SK-N-SH (cell line): ENCODE measurements at regions of chr12 and their contacts with region 1.

Region 1: GRCh38 chr12:81610955-81611889 is 147.9 kb downstream of the PPFIA2 start:
- DNase-seq: peak; percentile 15
- H3K4me3 ChIP-seq: peak overlapping the region in 1 of 2 experiments; percentile 26; a peak in 3 of 4 replicates
- H3K27ac ChIP-seq: no peak overlapping the region
- H3K4me1 ChIP-seq: no peaks in the 10 kb centered on the region; a peak in 1 of 4 replicates
- H3K27me3 ChIP-seq: no peaks in the 10 kb centered on the region
- CTCF ChIP-seq: peak; percentile 53
- EP300 ChIP-seq: no peak
- RAD21 ChIP-seq: peak; percentile 42

Region 2: GRCh38 chr12:81597928-81598604 is 13.2 kb before region 1 on chr12:
- CTCF ChIA-PET with region 1: interaction called, 13 read pairs
- POLR2A ChIA-PET with region 1: no interaction called
- DNase-seq: peak; percentile 7
- H3K4me3 ChIP-seq: no peak overlapping the region
- H3K27ac ChIP-seq: peak overlapping the region in 1 of 2 experiments; percentile 28; a peak in 1 of 4 replicates
- H3K4me1 ChIP-seq: no peaks in the 10 kb centered on the region; a peak in 1 of 4 replicates
- H3K27me3 ChIP-seq: no peaks in the 10 kb centered on the region
- CTCF ChIP-seq: no peak
- EP300 ChIP-seq: no peak
- RAD21 ChIP-seq: no peak